Activated naive CD4-positive, alpha-beta T cell treated with anti-CD3 and anti-CD28 coated beads for 36 hours (primary cell): ENCODE measurements at regions of chr1 and their contacts with region 1.

Region 1: GRCh38 chr1:110060034-110060661 is 10.3 kb downstream of the ALX3 start:
- DNase-seq: peak; percentile 85
- H3K4me3 Mint-ChIP-seq: no peak overlapping the region
- H3K27ac Mint-ChIP-seq: no peak overlapping the region
- H3K4me1 Mint-ChIP-seq: no peaks in the 10 kb centered on the region
- H3K27me3 Mint-ChIP-seq: no peaks in the 10 kb centered on the region

Region 2: DNA sequence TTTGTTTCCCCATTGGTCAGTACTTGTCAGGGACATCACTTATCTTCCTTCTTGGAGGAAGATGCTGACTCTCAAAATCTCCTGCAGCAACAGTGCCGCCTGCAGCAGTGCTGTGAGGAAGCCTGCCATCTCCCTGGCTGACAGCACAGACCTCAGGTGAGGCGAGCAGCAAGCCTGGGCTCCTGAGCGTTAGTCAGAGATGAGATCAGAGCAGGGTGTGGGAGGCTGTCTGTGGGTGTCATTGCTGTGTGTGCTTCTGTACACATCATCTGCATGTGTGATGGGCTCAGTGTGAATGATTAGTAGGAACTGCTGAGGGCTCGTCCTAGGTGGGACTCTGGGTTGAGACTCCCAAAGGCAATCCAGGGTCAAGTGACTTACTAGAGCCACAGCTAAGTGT is 19.6 kb before region 1 on chr1:
- CTCF ChIA-PET with region 1: interaction called, 27 read pairs
- intact Hi-C with region 1: no loop called
- DNase-seq: peak; percentile 14
- H3K4me3 Mint-ChIP-seq: no peak overlapping the region
- H3K27ac Mint-ChIP-seq: no peak overlapping the region
- H3K4me1 Mint-ChIP-seq: peaks cover 19% of the 10 kb centered on the region
- H3K27me3 Mint-ChIP-seq: no peaks in the 10 kb centered on the region

Region 3: DNA sequence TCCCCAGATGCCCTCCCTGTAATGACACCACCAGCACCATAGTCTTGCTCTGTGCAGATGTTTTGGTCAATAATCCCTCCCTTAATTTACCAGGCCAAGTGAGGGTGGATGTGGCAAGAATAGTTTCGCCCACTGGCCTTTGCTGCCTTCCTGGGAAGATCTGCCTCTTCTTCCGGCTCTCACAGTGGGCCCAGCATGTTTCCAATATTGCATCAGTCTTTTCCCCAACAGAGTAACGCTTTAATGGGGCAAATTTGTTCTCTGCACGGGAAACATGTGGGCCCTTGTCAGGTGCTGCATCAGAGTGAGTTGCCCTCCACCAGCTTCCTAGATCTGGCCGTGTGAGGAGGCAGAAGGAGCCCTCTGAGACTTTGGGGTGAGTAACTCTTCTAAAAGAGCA is 22.3 kb after region 1 on chr1:
- CTCF ChIA-PET with region 1: interaction called, 18 read pairs
- intact Hi-C with region 1: no loop called
- DNase-seq: no peak
- H3K4me3 Mint-ChIP-seq: no peak overlapping the region
- H3K27ac Mint-ChIP-seq: no peak overlapping the region
- H3K4me1 Mint-ChIP-seq: peaks cover 9% of the 10 kb centered on the region
- H3K27me3 Mint-ChIP-seq: peaks cover 53% of the 10 kb centered on the region

Region 4: GRCh38 chr1:110106013-110106941 is 46.1 kb after region 1 on chr1:
- CTCF ChIA-PET with region 1: interaction called, 103 read pairs
- intact Hi-C with region 1: no loop called
- DNase-seq: peak; percentile 78
- H3K4me3 Mint-ChIP-seq: no peak overlapping the region
- H3K27ac Mint-ChIP-seq: no peak overlapping the region
- H3K4me1 Mint-ChIP-seq: no peaks in the 10 kb centered on the region
- H3K27me3 Mint-ChIP-seq: peaks cover 2% of the 10 kb centered on the region

Region 5: DNA sequence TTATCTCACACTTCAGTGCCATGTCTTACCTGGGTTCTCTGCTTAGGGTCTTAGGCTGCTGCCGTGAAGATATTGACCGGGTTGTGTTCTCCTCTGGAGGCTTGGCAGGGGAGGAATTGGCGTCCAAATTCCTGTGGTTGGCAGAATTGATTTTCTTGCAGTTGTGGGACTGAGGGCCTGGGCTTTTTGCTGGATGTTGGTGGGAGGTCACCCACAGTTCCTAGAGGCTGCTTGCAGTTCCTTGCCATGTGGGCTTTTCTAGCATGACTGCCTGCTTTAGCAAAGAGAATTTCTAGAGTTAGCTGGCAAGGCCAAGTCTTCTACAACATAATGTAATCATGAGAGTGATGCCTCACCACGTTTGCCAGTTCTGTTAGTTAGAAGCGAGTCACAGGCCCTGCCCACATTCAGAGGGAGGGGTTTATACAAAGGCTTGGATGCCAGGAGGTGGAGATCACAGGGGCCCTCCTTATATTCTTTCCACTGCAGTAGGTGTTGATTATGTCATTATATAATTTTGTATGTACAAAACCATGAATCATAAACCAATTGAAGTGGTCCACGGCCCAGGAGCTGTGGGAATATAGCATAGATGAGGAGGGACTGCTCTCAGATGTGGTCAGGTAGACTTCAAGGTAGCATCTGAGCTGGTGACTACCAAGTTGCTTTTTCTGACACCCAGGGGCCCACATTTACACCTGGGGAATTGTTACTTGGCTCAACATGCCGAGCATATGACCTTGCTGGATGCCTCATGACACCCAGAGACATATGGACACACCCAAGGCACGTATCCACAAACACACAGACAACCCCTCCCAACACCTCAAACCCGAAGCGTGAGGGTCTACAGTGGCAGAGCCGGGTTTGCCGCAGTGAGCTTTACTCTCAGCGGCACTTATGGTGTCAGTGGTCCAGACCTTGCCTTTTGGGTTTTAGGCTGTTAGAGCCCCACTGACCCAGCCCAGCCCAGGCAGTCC is 58.8 kb after region 1 on chr1:
- CTCF ChIA-PET with region 1: interaction called, 11 read pairs
- intact Hi-C with region 1: no loop called
- DNase-seq: peak; percentile 50
- H3K4me3 Mint-ChIP-seq: no peak overlapping the region
- H3K27ac Mint-ChIP-seq: no peak overlapping the region
- H3K4me1 Mint-ChIP-seq: peaks cover 4% of the 10 kb centered on the region
- H3K27me3 Mint-ChIP-seq: peaks cover 18% of the 10 kb centered on the region

Region 6: DNA sequence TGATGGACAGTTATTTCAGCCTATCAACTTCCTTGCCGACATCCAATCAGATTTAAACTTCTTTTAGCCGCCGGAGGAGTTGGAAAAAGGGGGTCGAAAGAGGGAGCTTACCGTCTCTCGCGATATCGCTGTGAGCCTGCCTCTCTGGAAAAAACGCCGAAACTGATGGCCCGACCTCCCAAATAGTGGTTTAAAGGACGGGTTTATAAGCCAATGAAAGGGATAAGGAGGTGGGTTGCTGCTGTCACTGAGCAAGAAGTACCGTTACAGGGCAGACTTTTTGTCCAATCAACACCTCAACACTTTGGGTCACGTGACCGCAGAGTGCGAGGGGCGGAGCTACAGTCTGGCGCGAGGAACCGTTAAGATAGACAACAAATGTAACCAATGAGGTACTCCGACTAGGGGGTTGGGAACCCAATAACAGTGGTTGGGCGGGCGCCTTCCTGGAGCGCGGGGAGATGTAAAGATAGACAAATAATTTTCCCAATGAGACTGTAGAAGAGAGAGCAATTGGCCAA is 278.8 kb after region 1 on chr1 and contains the start of gene RBM15:
- CTCF ChIA-PET with region 1: no interaction called
- intact Hi-C with region 1: no loop called
- DNase-seq: peak; percentile 99
- H3K4me3 Mint-ChIP-seq: no peak within 1 kb of the TSS
- H3K27ac Mint-ChIP-seq: no peak within 1 kb of the TSS
- H3K4me1 Mint-ChIP-seq: peaks cover 48% of the 10 kb centered on the region
- H3K27me3 Mint-ChIP-seq: no peaks in the 10 kb centered on the region
- total RNA-seq, gene RBM15: 91.0 to 91.5 TPM